MCF 10A (cell line): ENCODE measurements at regions of chr19 and their contacts with region 1.

Region 1: GRCh38 chr19:12666265-12667048 is at the starts of genes MAN2B1 and WDR83:
- DNase-seq: peak; percentile 78
- H3K4me3 Mint-ChIP-seq: peak within 1 kb of the TSS; percentile 92
- H3K27ac Mint-ChIP-seq: peak within 1 kb of the TSS; percentile 89
- H3K4me1 Mint-ChIP-seq: peaks cover 7% of the 10 kb centered on the region
- H3K27me3 Mint-ChIP-seq: no peaks in the 10 kb centered on the region
- CTCF ChIP-seq: no peak
- total RNA-seq, gene MAN2B1: 53.8 and 67.0 TPM in 2 replicates
- total RNA-seq, gene WDR83: 9.3 and 11.7 TPM in 2 replicates

Region 2: DNA sequence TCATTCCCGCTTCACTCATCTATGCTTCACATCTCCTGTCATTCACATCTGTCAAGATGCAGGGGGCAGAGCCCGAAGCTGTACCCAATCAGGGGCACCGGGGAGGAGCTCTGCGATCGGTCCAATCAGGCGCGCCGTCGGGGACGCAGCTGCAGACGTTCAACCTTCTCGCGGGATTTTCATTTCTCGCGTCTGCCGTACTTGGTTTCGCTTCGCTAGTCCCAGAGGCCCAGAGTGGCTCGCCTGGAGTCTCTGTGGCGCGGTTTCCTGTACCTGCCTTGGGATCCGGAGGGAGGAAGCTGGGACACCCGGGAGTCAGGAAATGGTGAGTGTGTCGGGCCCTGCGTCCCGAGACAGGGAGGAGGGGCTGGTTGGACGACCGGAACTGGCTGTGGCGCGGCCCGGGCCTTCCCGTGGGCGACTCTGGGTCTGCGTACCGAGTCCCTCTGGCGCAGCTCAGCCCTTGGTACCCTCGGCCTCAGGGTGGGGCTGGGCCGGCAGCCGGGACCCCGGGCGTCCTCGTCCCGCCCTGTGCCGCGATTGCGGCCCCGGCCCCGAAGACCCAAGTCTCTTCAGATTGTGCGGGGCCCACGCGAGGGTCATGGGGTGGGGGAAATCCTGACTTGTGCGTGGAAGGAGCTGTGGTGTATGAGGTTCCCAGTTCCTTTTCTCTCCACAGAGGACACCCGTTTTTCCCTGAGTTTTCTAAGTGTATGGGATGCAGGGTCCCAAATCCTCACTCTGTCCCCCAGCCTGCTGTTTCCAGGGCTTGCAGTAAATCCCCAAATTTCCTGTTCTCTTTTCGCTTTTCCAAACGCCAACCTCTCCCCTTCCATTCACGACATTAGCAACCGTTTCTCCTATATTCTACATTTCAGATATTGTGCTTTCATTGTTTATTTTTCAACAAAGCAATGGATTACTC is 503.3 kb before region 1 on chr19 and contains the start of gene ZNF136:
- CTCF ChIA-PET with region 1: no interaction called
- POLR2A ChIA-PET with region 1: interaction called, 4 read pairs
- intact Hi-C with region 1: loop called (anchors 10 kb)
- DNase-seq: peak; percentile 96
- H3K4me3 Mint-ChIP-seq: peak within 1 kb of the TSS; percentile 83
- H3K27ac Mint-ChIP-seq: peak within 1 kb of the TSS; percentile 97
- H3K4me1 Mint-ChIP-seq: peaks cover 8% of the 10 kb centered on the region
- H3K27me3 Mint-ChIP-seq: no peaks in the 10 kb centered on the region
- CTCF ChIP-seq: no peak
- total RNA-seq, gene ZNF136: 3.7 and 4.3 TPM in 2 replicates

Region 3: GRCh38 chr19:12551060-12551832 is 115.2 kb before region 1 on chr19 and contains the start of gene ZNF564:
- CTCF ChIA-PET with region 1: no interaction called
- POLR2A ChIA-PET with region 1: interaction called, 15 read pairs
- intact Hi-C with region 1: no loop called
- DNase-seq: peak; percentile 99
- H3K4me3 Mint-ChIP-seq: peak within 1 kb of the TSS; percentile 90
- H3K27ac Mint-ChIP-seq: peak within 1 kb of the TSS; percentile 90
- H3K4me1 Mint-ChIP-seq: peaks cover 6% of the 10 kb centered on the region
- H3K27me3 Mint-ChIP-seq: no peaks in the 10 kb centered on the region
- CTCF ChIP-seq: no peak
- total RNA-seq, gene ZNF564: 4.4 and 5.1 TPM in 2 replicates

Region 4: GRCh38 chr19:12564016-12564664 is 102.3 kb before region 1 on chr19:
- CTCF ChIA-PET with region 1: interaction called, 12 read pairs
- POLR2A ChIA-PET with region 1: no interaction called
- intact Hi-C with region 1: no loop called
- DNase-seq: peak; percentile 86
- H3K4me3 Mint-ChIP-seq: no peak overlapping the region
- H3K27ac Mint-ChIP-seq: no peak overlapping the region
- H3K4me1 Mint-ChIP-seq: peaks cover 6% of the 10 kb centered on the region
- H3K27me3 Mint-ChIP-seq: no peaks in the 10 kb centered on the region
- CTCF ChIP-seq: peak; percentile 88

Region 5: DNA sequence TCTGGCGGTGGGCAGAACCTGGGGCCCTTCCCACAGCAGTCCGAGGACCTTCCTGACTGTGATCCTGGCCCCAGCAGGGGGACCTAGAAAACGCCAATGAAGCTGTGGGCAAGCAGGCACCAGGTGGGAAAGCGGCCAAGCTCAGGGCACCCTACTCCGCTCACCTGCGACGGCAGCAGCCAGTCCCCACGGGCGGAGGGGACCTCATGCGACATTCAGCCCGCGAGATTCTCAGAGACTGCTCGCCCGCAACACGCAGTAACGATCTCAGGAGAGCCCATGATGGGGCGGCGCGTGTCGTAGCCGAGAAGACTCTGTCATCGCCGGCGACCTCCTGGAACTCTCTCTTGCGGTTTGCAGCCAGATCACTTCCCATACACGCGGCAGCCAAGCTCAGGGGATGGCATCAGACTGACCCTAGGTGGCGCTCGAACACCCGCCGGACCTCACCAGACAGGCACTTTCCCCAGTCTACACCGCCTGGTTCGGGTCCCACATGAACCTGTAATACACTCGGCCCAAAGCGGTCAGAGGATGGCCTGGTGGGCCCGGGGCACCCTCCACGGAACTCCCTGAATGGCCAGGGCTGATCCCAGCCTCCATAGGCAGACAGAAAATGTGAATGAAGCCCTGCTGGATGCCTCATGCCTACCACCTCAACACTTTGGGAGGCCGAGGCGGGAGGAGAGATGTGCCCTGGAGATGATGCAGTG is 26.4 kb before region 1 on chr19:
- CTCF ChIA-PET with region 1: no interaction called
- POLR2A ChIA-PET with region 1: no interaction called
- intact Hi-C with region 1: no loop called
- DNase-seq: no peak
- H3K4me3 Mint-ChIP-seq: no peak overlapping the region
- H3K27ac Mint-ChIP-seq: no peak overlapping the region
- H3K4me1 Mint-ChIP-seq: peaks cover 3% of the 10 kb centered on the region
- H3K27me3 Mint-ChIP-seq: no peaks in the 10 kb centered on the region
- CTCF ChIP-seq: no peak

Region 6: DNA sequence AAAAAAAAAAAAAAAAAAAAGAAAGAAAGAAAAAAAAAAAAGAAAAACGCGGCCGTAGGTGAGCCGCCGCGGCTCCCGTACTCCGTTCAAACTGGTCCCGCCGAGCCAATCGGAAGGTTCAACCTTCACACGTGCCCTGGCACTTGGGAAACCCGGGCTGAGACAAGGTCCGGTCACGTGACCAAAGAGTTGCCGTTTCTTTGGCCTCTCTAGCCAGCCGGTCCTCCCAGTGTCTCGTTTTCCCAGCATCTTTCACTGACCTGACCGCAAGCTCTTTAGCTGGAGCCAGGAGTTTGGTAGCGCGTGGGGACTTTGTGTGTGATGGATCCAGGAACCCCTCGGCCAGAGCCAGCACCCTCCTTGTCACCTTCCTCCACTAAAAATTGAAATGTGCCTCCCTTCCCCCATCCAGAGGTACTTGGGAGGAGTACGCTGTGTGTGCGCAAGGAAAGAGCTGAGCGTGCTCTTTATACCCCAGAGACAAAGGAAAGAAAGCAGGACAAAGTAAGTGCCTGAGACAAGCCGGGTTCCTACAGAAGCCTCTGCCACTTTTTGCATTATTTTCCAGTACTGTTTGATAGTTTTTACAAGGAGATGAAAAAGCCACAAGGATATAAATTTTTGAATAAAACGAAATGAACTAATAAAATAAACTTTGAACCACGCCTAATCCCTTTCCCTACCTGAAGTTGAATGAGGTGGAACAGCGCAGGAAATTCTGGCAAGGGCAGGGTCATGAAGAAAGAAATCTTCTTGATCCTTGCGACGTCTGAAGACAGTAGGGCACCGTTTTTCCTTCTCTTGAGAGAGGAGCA is 56.3 kb after region 1 on chr19:
- CTCF ChIA-PET with region 1: interaction called, 5 read pairs
- POLR2A ChIA-PET with region 1: interaction called, 12 read pairs
- intact Hi-C with region 1: no loop called
- DNase-seq: peak; percentile 100
- H3K4me3 Mint-ChIP-seq: peak overlapping the region; percentile 96
- H3K27ac Mint-ChIP-seq: peak overlapping the region; percentile 96
- H3K4me1 Mint-ChIP-seq: peaks cover 12% of the 10 kb centered on the region
- H3K27me3 Mint-ChIP-seq: no peaks in the 10 kb centered on the region
- CTCF ChIP-seq: no peak